CD14-positive monocyte (primary cell): ENCODE measurements at regions of chr5 and their contacts with region 1.

Region 1: GRCh38 chr5:178461004-178461730 is 129.0 kb downstream of the COL23A1 start:
- DNase-seq: peak; percentile 63 to 83 (median 75)
- H3K4me3 ChIP-seq: peak overlapping the region in 1 of 3 experiments; percentile 42
- H3K4me3 Mint-ChIP-seq: peak overlapping the region; percentile 58 to 66
- H3K27ac ChIP-seq: no peak overlapping the region
- H3K27ac Mint-ChIP-seq: no peak overlapping the region
- H3K4me1 ChIP-seq: peaks cover 32 to 45% of the 10 kb centered on the region in 2 donors
- H3K4me1 Mint-ChIP-seq: peaks cover 28% of the 10 kb centered on the region
- H3K27me3 ChIP-seq: no peaks in the 10 kb centered on the region
- H3K27me3 Mint-ChIP-seq: peaks cover 0 to 1% (median 0%) of the 10 kb centered on the region in 3 donors
- CTCF ChIP-seq: peak; percentile 96

Region 2: GRCh38 chr5:178505639-178506407 is 44.7 kb after region 1 on chr5:
- intact Hi-C with region 1: no loop called
- DNase-seq: no peak
- H3K4me3 ChIP-seq: no peak overlapping the region
- H3K4me3 Mint-ChIP-seq: no peak overlapping the region
- H3K27ac ChIP-seq: no peak overlapping the region
- H3K27ac Mint-ChIP-seq: no peak overlapping the region
- H3K4me1 ChIP-seq: no peaks in the 10 kb centered on the region
- H3K4me1 Mint-ChIP-seq: peaks cover 8% of the 10 kb centered on the region
- H3K27me3 ChIP-seq: no peaks in the 10 kb centered on the region
- H3K27me3 Mint-ChIP-seq: peaks cover 0 to 1% (median 0%) of the 10 kb centered on the region in 3 donors
- CTCF ChIP-seq: no peak

Region 3: DNA sequence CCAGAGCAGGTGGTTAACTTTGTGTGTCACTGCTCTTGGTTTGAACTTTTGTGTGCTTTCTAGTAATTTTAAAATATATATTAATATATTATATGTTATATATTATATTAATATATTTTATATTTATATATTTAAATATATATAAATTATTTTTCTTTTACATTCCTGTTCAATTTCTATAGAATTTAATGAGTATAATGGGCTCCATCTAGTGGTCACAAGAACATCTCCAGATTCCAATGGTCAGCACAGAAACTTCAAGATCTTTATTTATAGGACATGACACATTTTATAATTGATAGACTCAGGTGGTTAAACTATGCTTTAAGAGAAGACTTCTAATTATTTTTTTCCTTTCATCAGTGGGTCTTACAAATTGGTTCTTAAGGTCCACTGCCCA is 89.9 kb after region 1 on chr5:
- intact Hi-C with region 1: loop called (anchors 2 to 5 kb)
- DNase-seq: peak in 2 of 3 donors; percentile 29 to 42
- H3K4me3 ChIP-seq: no peak overlapping the region
- H3K4me3 Mint-ChIP-seq: no peak overlapping the region
- H3K27ac ChIP-seq: no peak overlapping the region
- H3K27ac Mint-ChIP-seq: no peak overlapping the region
- H3K4me1 ChIP-seq: peaks cover 2% of the 10 kb centered on the region in 2 donors
- H3K4me1 Mint-ChIP-seq: peaks cover 10% of the 10 kb centered on the region
- H3K27me3 ChIP-seq: no peaks in the 10 kb centered on the region
- H3K27me3 Mint-ChIP-seq: peaks cover 1 to 4% (median 2%) of the 10 kb centered on the region in 3 donors
- CTCF ChIP-seq: peak; percentile 66

Region 4: DNA sequence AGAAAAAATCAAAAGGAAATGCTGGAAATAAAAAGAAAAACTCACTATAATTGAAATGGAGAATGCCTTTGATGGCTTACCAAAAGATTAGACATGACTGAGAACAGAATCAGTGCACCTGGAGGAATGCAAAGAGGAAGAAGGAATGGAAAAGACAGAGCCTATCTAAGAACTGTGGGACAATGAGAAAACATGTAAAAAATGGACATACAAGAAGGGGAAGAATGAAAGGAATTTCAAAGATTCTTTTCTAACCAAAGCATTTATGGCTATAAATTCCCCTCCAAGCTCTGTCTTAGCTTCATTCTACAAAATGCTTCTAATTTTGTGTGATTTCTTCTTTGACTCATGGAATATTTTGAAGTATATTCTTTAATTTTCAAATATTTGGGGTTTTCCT is 213.2 kb after region 1 on chr5:
- intact Hi-C with region 1: no loop called
- DNase-seq: no peak
- H3K4me3 ChIP-seq: no peak overlapping the region
- H3K4me3 Mint-ChIP-seq: no peak overlapping the region
- H3K27ac ChIP-seq: no peak overlapping the region
- H3K27ac Mint-ChIP-seq: no peak overlapping the region
- H3K4me1 ChIP-seq: peaks cover 0 to 15% of the 10 kb centered on the region in 2 donors
- H3K4me1 Mint-ChIP-seq: peaks cover 13% of the 10 kb centered on the region
- H3K27me3 ChIP-seq: peaks cover 0 to 4% of the 10 kb centered on the region in 2 donors
- H3K27me3 Mint-ChIP-seq: peaks cover 5 to 15% (median 11%) of the 10 kb centered on the region in 3 donors
- CTCF ChIP-seq: no peak